Caco-2 (cell line): ENCODE measurements at regions of chr11 and their contacts with region 1.

Region 1: GRCh38 chr11:27698872-27699474 is 1.3 kb downstream of the BDNF start:
- DNase-seq: peak; percentile 89 to 91
- H3K4me3 ChIP-seq: peak overlapping the region; percentile 70
- H3K4me3 Mint-ChIP-seq: peak overlapping the region; percentile 90
- H3K27ac Mint-ChIP-seq: peak overlapping the region; percentile 74
- H3K4me1 ChIP-seq: peaks cover 17% of the 10 kb centered on the region
- H3K4me1 Mint-ChIP-seq: peaks cover 20% of the 10 kb centered on the region
- H3K27me3 ChIP-seq: no peaks in the 10 kb centered on the region
- H3K27me3 Mint-ChIP-seq: no peaks in the 10 kb centered on the region
- CTCF ChIP-seq: peak; percentile 87 to 97

Region 2: DNA sequence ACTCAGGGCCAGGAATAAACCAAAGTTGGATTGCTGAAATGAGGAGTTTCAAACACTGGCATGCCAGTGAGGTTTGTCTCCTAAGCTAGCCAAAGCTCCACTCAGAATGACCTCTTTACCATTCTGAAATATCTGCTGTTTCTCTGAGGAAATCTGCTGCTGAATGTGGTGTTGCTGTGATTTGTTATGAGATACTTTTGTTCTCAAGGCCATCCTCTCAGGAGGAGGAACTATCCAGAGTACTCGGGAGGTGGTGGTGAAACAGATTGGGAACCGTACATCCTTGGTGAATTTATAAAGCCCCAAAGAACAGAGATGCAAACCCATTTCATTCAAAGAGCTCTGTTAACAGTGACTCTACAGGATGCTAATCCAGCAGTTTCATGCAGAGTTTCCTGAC is 49.2 kb before region 1 on chr11:
- CTCF ChIA-PET with region 1: no interaction called
- POLR2A ChIA-PET with region 1: no interaction called
- intact Hi-C with region 1: no loop called
- DNase-seq: no peak
- H3K4me3 ChIP-seq: no peak overlapping the region
- H3K4me3 Mint-ChIP-seq: no peak overlapping the region
- H3K27ac Mint-ChIP-seq: no peak overlapping the region
- H3K4me1 ChIP-seq: no peaks in the 10 kb centered on the region
- H3K4me1 Mint-ChIP-seq: no peaks in the 10 kb centered on the region
- H3K27me3 ChIP-seq: no peaks in the 10 kb centered on the region; the same call in 1 of the 2 replicates
- H3K27me3 Mint-ChIP-seq: no peaks in the 10 kb centered on the region
- CTCF ChIP-seq: no peak

Region 3: DNA sequence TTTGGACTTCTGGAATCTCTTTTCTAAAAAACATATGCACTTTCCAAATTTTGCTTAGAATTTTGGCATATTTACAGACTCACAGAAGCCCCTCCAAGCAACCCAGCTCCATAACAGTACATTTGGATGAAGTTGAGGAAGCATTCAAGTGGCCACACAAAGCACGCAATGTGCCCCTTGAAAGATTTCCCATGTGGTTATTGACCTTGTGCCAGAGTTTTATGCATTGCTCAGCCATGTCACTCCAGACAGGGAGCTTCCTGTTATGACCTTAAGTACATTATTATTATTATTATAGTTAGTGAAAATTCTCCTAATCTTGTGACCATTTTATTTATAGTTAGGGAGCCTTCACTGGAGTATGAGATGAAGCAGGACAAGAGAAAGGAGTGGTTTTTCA is 36.3 kb after region 1 on chr11:
- CTCF ChIA-PET with region 1: no interaction called
- POLR2A ChIA-PET with region 1: no interaction called
- intact Hi-C with region 1: no loop called
- DNase-seq: no peak
- H3K4me3 ChIP-seq: no peak overlapping the region
- H3K4me3 Mint-ChIP-seq: no peak overlapping the region
- H3K27ac Mint-ChIP-seq: no peak overlapping the region
- H3K4me1 ChIP-seq: no peaks in the 10 kb centered on the region
- H3K4me1 Mint-ChIP-seq: no peaks in the 10 kb centered on the region
- H3K27me3 ChIP-seq: no peaks in the 10 kb centered on the region
- H3K27me3 Mint-ChIP-seq: no peaks in the 10 kb centered on the region
- CTCF ChIP-seq: no peak

Region 4: DNA sequence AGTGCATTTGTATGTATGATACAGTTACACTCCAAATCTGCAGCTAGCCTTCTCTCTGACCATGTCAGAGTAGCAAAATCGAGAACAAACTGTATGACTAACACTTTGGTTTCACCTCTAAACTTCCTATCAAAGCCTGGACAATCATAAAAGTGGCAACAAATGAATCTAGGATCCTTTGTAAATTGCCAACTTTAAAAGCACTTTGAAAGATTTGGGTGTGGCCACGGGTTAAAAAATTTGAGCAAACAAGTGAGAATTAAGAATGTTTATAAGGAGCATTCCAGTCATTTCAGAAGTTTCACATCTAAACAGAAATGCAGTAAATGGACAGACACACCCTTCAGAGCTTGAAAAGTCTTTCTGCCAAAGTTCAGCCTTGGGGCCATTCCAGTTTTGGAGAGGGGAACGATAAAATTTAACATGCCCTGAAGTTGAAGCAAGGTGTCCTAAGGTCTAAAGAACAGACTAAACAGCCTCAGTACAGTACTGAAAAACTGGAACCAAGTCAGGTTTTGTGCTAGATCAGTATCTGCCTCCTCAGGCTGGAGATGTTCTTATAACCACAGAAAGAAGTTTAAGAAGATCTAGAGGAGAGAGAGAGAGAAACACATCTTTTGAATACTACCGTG is 183.2 kb after region 1 on chr11:
- CTCF ChIA-PET with region 1: no interaction called
- POLR2A ChIA-PET with region 1: no interaction called
- intact Hi-C with region 1: loop called (anchors 5 kb)
- DNase-seq: peak; percentile 59 to 62
- H3K4me3 ChIP-seq: no peak overlapping the region
- H3K4me3 Mint-ChIP-seq: peak overlapping the region; percentile 20
- H3K27ac Mint-ChIP-seq: peak overlapping the region; percentile 84
- H3K4me1 ChIP-seq: peaks cover 36% of the 10 kb centered on the region
- H3K4me1 Mint-ChIP-seq: peaks cover 21% of the 10 kb centered on the region
- H3K27me3 ChIP-seq: no peaks in the 10 kb centered on the region
- H3K27me3 Mint-ChIP-seq: no peaks in the 10 kb centered on the region
- CTCF ChIP-seq: no peak

Region 5: DNA sequence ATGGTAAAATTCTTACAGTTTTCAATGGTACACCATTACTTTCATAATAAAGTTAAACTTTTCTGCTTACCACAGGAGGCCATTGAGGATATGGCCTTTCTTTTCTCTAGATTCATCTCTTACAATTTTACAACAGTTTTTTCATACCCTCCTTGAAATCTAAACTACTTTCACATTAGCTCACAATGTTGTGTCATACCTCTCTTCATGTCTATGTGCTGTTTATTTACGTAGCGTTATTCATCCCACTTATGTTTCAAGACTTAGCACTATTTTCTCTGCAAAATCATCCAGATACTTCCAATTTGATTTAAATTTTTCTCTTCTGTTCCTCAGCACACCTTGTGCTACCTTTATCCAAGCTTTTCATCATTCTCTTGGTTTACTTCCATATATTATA is 532.5 kb after region 1 on chr11:
- CTCF ChIA-PET with region 1: no interaction called
- POLR2A ChIA-PET with region 1: no interaction called
- intact Hi-C with region 1: loop called (anchors 5 kb)
- DNase-seq: no peak
- H3K4me3 ChIP-seq: no peak overlapping the region
- H3K4me3 Mint-ChIP-seq: no peak overlapping the region
- H3K27ac Mint-ChIP-seq: no peak overlapping the region
- H3K4me1 ChIP-seq: peaks cover 11% of the 10 kb centered on the region; the same call in 1 of the 2 replicates
- H3K4me1 Mint-ChIP-seq: peaks cover 8% of the 10 kb centered on the region
- H3K27me3 ChIP-seq: no peaks in the 10 kb centered on the region
- H3K27me3 Mint-ChIP-seq: no peaks in the 10 kb centered on the region
- CTCF ChIP-seq: no peak

Region 6: GRCh38 chr11:28384418-28384817 is 685.4 kb after region 1 on chr11:
- CTCF ChIA-PET with region 1: no interaction called
- POLR2A ChIA-PET with region 1: no interaction called
- intact Hi-C with region 1: no loop called
- DNase-seq: no peak
- H3K4me3 ChIP-seq: no peak overlapping the region
- H3K4me3 Mint-ChIP-seq: no peak overlapping the region
- H3K27ac Mint-ChIP-seq: no peak overlapping the region
- H3K4me1 ChIP-seq: no peaks in the 10 kb centered on the region
- H3K4me1 Mint-ChIP-seq: no peaks in the 10 kb centered on the region
- H3K27me3 ChIP-seq: no peaks in the 10 kb centered on the region
- H3K27me3 Mint-ChIP-seq: no peaks in the 10 kb centered on the region
- CTCF ChIP-seq: no peak

Region 7: DNA sequence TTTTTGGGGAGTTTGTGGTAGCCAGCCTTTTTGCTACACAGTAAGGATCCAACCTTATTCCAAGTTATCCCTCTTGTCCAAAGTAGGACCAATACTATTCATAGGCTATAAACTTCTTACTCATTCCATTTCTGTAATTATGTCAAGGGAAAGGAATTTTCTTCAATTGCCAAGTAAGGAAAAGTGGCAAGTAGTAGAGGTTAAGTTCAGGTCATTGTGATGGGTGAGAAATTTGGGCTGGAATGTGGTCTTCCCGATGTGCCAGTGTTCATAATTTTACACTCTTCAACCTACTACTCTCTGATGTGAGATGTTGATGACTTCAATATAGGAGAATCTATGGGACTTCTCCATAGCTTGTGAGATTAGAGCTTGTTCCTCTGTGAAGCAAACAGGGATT is 1058.0 kb after region 1 on chr11:
- CTCF ChIA-PET with region 1: no interaction called
- POLR2A ChIA-PET with region 1: no interaction called
- intact Hi-C with region 1: loop called (anchors 5 kb)
- DNase-seq: no peak
- H3K4me3 ChIP-seq: no peak overlapping the region
- H3K4me3 Mint-ChIP-seq: no peak overlapping the region
- H3K27ac Mint-ChIP-seq: no peak overlapping the region
- H3K4me1 ChIP-seq: peaks cover 36% of the 10 kb centered on the region
- H3K4me1 Mint-ChIP-seq: peaks cover 10% of the 10 kb centered on the region
- H3K27me3 ChIP-seq: no peaks in the 10 kb centered on the region
- H3K27me3 Mint-ChIP-seq: no peaks in the 10 kb centered on the region
- CTCF ChIP-seq: no peak

Region 8: GRCh38 chr11:29019960-29020683 is 1321.1 kb after region 1 on chr11:
- CTCF ChIA-PET with region 1: interaction called, 4 read pairs
- POLR2A ChIA-PET with region 1: no interaction called
- intact Hi-C with region 1: loop called (anchors 5 kb)
- DNase-seq: peak in 1 of 2 experiments; percentile 20
- H3K4me3 ChIP-seq: no peak overlapping the region
- H3K4me3 Mint-ChIP-seq: no peak overlapping the region
- H3K27ac Mint-ChIP-seq: no peak overlapping the region
- H3K4me1 ChIP-seq: no peaks in the 10 kb centered on the region
- H3K4me1 Mint-ChIP-seq: no peaks in the 10 kb centered on the region
- H3K27me3 ChIP-seq: no peaks in the 10 kb centered on the region
- H3K27me3 Mint-ChIP-seq: no peaks in the 10 kb centered on the region
- CTCF ChIP-seq: peak; percentile 45 to 50

Region 9: GRCh38 chr11:29333993-29334775 is 1635.2 kb after region 1 on chr11:
- CTCF ChIA-PET with region 1: interaction called, 17 read pairs
- POLR2A ChIA-PET with region 1: no interaction called
- intact Hi-C with region 1: loop called (anchors 1 kb)
- DNase-seq: peak in 1 of 2 experiments; percentile 36
- H3K4me3 ChIP-seq: no peak overlapping the region
- H3K4me3 Mint-ChIP-seq: no peak overlapping the region
- H3K27ac Mint-ChIP-seq: no peak overlapping the region
- H3K4me1 ChIP-seq: peaks cover 18% of the 10 kb centered on the region
- H3K4me1 Mint-ChIP-seq: peaks cover 9% of the 10 kb centered on the region
- H3K27me3 ChIP-seq: no peaks in the 10 kb centered on the region
- H3K27me3 Mint-ChIP-seq: peaks cover 3% of the 10 kb centered on the region
- CTCF ChIP-seq: peak; percentile 41 to 50